Right ventricle myocardium inferior (tissue), 1 donor: ENCODE measurements at regions of chr15 and their contacts with region 1.

Region 1: GRCh38 chr15:73633111-73633990 is at the start of gene NPTN:
- DNase-seq: peak; percentile 99
- ATAC-seq: peak; percentile 96
- total RNA-seq, gene NPTN: 211 TPM

Region 2: GRCh38 chr15:73305331-73306211 is 327.8 kb before region 1 on chr15:
- intact Hi-C with region 1: loop called (anchors 10 kb)
- DNase-seq: no peak
- ATAC-seq: peak; percentile 79

Region 3: DNA sequence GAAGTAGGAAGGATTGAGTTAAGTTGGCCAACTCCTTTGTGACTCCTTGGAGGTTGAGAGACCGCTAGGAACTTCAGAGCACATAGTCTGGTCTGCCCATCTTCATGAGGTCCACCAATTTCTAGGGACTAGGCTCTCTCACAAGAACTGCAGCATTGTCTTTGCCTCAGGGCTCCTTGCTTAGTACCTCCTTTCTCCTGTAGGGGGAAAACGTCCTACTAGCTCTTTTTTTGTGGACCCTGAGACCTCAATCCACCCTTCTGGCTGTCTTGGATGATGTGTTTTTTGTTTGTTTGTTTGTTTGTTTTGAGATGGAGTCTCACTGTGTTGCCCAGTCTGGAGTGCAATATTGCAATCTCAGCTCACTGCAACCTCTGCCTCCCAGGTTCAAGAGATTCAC is 168.7 kb before region 1 on chr15:
- intact Hi-C with region 1: no loop called
- DNase-seq: no peak
- ATAC-seq: no peak

Region 4: GRCh38 chr15:73560501-73561117 is 72.7 kb before region 1 on chr15:
- intact Hi-C with region 1: loop called (anchors 1 kb)
- DNase-seq: no peak
- ATAC-seq: peak; percentile 56

Region 5: DNA sequence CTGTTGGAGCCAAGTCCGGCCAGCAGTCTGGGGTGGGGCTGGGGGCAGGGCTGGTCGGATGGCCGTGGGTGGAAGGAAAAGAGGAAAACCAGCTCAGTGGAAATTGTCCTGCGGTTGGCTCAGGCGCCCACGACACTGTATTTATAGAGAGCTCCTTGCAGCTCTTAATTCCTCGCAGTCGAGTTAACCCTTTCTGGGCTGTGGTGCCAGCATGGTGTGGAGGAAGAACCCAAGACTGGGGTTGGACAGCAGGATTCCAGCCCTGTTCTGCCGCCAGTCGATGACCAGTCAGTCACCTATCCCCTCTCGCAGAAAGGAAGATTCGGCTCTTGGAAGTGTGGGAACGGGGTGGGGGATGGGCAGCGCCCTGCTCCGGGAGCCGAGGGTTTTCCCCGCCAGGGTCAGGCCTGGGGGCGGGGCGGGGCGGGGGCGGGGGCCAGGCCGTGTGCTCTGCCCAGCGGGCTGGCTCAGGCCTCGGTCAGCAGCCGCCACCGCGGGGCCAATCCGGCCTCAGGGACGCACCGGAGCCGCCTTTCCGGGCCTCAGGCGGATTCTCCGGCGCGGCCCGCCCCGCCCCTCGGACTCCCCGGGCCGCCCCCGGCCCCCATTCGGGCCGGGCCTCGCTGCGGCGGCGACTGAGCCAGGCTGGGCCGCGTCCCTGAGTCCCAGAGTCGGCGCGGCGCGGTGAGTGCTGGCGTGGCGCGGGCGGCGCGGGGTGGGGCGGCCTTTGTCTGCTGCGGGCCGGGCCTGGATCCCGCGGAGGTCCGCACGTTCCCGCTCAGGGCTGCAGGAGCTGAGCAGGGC is 50.6 kb after region 1 on chr15 and contains the start of gene CD276:
- intact Hi-C with region 1: loop called (anchors 5 kb)
- DNase-seq: peak; percentile 90
- ATAC-seq: peak; percentile 91
- total RNA-seq, gene CD276: 35.6 TPM